ENCODE measurements at regions of chr3 and their contacts with region 1.

Region 1: GRCh38 chr3:46923559-46924350 is 46.2 kb downstream of the PTH1R start:
- DNase-seq: peak in 7 of 9 experiments; percentile 16 to 61 (median 48)
- ATAC-seq: peak; percentile 63
- H3K4me3 ChIP-seq: no peak overlapping the region
- H3K4me3 Mint-ChIP-seq: no peak overlapping the region
- H3K27ac ChIP-seq: no peak overlapping the region
- H3K27ac Mint-ChIP-seq: peak overlapping the region; percentile 77
- H3K4me1 ChIP-seq: peaks cover 28% of the 10 kb centered on the region
- H3K4me1 Mint-ChIP-seq: peaks cover 29% of the 10 kb centered on the region
- H3K27me3 ChIP-seq: no peaks in the 10 kb centered on the region
- H3K27me3 Mint-ChIP-seq: no peaks in the 10 kb centered on the region
- CTCF ChIP-seq: peak; percentile 46

Region 2: GRCh38 chr3:46909535-46910442 is 14.0 kb before region 1 on chr3:
- CTCF ChIA-PET with region 1: interaction called, 36 read pairs
- POLR2A ChIA-PET with region 1: interaction called, 3 read pairs
- intact Hi-C with region 1: no loop called
- DNase-seq: peak; percentile 65 to 84 (median 81)
- ATAC-seq: peak; percentile 89
- H3K4me3 ChIP-seq: no peak overlapping the region
- H3K4me3 Mint-ChIP-seq: no peak overlapping the region
- H3K27ac ChIP-seq: no peak overlapping the region
- H3K27ac Mint-ChIP-seq: no peak overlapping the region
- H3K4me1 ChIP-seq: peaks cover 17% of the 10 kb centered on the region
- H3K4me1 Mint-ChIP-seq: peaks cover 18% of the 10 kb centered on the region
- H3K27me3 ChIP-seq: no peaks in the 10 kb centered on the region
- H3K27me3 Mint-ChIP-seq: no peaks in the 10 kb centered on the region
- CTCF ChIP-seq: peak; percentile 91

Region 3: GRCh38 chr3:46935168-46935858 is 11.6 kb after region 1 on chr3:
- CTCF ChIA-PET with region 1: interaction called, 12 read pairs
- POLR2A ChIA-PET with region 1: interaction called, 3 read pairs
- intact Hi-C with region 1: no loop called
- DNase-seq: no peak
- ATAC-seq: no peak
- H3K4me3 ChIP-seq: no peak overlapping the region
- H3K4me3 Mint-ChIP-seq: no peak overlapping the region
- H3K27ac ChIP-seq: no peak overlapping the region
- H3K27ac Mint-ChIP-seq: no peak overlapping the region
- H3K4me1 ChIP-seq: peaks cover 36% of the 10 kb centered on the region
- H3K4me1 Mint-ChIP-seq: peaks cover 67% of the 10 kb centered on the region
- H3K27me3 ChIP-seq: no peaks in the 10 kb centered on the region
- H3K27me3 Mint-ChIP-seq: no peaks in the 10 kb centered on the region
- CTCF ChIP-seq: no peak

Measured in CD8-positive, alpha-beta T cell (primary cell).